Posterior vena cava (tissue), 2 donors: ENCODE measurements at regions of chr12 and their contacts with region 1.

Region 1: DNA sequence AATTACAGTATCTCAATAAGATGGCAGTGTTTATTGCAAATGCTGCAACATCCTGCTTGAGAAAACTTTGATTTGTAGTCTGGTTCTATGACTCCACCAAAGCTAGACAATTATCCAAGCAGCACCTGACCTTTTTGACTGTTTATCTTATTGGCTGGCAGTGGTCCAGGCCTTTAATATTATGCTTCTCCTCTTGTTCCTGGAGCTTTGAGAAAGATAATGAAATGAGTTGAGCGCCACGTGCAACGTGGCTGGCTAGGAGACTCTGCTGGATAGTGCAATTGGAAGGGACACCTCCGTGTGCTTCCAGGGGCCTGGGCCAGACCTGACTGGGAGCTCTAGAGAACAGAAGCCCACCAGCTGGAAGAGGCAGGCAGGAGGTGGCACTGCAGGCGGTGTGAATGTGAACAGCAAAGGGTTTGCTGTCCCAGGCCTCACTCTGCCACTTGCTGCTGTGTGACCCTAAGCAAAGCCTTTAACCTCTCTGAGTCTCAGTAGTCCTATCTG is 349.3 kb downstream of the CACNA1C start:
- DNase-seq: no peak

Region 2: DNA sequence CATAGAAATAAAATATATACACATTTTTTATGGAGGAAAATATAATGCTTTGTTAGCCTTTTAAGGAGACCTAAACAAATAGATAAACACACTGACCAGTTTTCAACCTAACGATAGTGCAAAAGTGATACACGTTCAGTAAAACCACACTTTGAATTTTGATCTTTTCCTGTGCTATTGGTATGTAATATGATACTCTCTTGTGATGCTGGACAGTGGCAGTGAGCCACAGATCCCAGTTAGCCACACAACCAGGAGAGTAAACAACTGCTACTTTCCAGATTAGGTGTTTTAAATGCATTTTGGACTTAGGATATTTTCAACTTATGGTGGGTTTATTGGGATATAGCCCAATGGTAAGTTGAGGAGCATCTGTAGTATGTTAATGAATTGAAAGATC is 1168.1 kb before region 1 on chr12:
- intact Hi-C with region 1: loop called in 1 of 2 experiments (anchors 5 kb)
- DNase-seq: no peak

Region 3: GRCh38 chr12:3381059-3382047 is 979.2 kb after region 1 on chr12:
- intact Hi-C with region 1: no loop called
- DNase-seq: no peak